ENCODE measurements at regions of chr5 and their contacts with region 1.

Region 1: GRCh38 chr5:72816311-72817145 is at the start of gene TNPO1:
- DNase-seq: peak; percentile 80
- H3K4me3 Mint-ChIP-seq: peak within 1 kb of the TSS; percentile 95
- H3K27ac Mint-ChIP-seq: peak within 1 kb of the TSS; percentile 95
- H3K4me1 Mint-ChIP-seq: peaks cover 22% of the 10 kb centered on the region
- H3K27me3 Mint-ChIP-seq: peaks cover 21% of the 10 kb centered on the region
- total RNA-seq, gene TNPO1: 133 and 142 TPM in 2 replicates

Region 2: GRCh38 chr5:71586941-71587765 is 1229.4 kb before region 1 on chr5 and contains the start of gene MCCC2:
- intact Hi-C with region 1: loop called (anchors 5 kb)
- DNase-seq: peak; percentile 96
- H3K4me3 Mint-ChIP-seq: peak within 1 kb of the TSS; percentile 95
- H3K27ac Mint-ChIP-seq: peak within 1 kb of the TSS; percentile 99
- H3K4me1 Mint-ChIP-seq: peaks cover 36% of the 10 kb centered on the region
- H3K27me3 Mint-ChIP-seq: no peaks in the 10 kb centered on the region
- total RNA-seq, gene MCCC2: 49.8 and 53.8 TPM in 2 replicates

Region 3: GRCh38 chr5:72307968-72308852 is 508.3 kb before region 1 on chr5:
- intact Hi-C with region 1: loop called (anchors 5 kb)
- DNase-seq: peak; percentile 95
- H3K4me3 Mint-ChIP-seq: peak overlapping the region; percentile 90
- H3K27ac Mint-ChIP-seq: peak overlapping the region; percentile 99
- H3K4me1 Mint-ChIP-seq: peaks cover 37% of the 10 kb centered on the region
- H3K27me3 Mint-ChIP-seq: peaks cover 2% of the 10 kb centered on the region

Region 4: GRCh38 chr5:72611118-72611730 is 205.3 kb before region 1 on chr5:
- intact Hi-C with region 1: loop called (anchors 1 kb)
- DNase-seq: peak; percentile 1
- H3K4me3 Mint-ChIP-seq: no peak overlapping the region
- H3K27ac Mint-ChIP-seq: no peak overlapping the region
- H3K4me1 Mint-ChIP-seq: no peaks in the 10 kb centered on the region
- H3K27me3 Mint-ChIP-seq: peaks cover 2% of the 10 kb centered on the region

Region 5: DNA sequence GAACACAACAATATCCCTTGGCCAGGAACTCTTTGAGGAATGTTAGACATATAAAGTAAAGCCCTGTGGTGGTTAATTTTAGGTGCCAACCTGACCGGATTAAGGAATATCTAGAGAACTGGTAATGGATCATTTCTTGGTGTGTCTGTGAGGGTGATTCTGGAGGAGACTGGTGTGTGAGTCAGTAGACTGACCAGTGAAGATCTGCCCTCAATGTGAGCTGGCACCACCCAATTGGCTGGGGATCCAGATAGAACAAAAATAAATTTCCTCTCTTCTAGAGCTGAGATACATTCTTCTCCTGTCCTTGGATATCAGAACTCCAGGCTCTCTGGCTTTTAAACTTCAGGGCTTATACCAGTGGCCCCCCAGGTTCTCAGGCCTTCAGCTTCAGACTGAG is 56.3 kb before region 1 on chr5:
- intact Hi-C with region 1: no loop called
- DNase-seq: no peak
- H3K4me3 Mint-ChIP-seq: no peak overlapping the region
- H3K27ac Mint-ChIP-seq: no peak overlapping the region
- H3K4me1 Mint-ChIP-seq: no peaks in the 10 kb centered on the region
- H3K27me3 Mint-ChIP-seq: peaks cover 14% of the 10 kb centered on the region

Region 6: DNA sequence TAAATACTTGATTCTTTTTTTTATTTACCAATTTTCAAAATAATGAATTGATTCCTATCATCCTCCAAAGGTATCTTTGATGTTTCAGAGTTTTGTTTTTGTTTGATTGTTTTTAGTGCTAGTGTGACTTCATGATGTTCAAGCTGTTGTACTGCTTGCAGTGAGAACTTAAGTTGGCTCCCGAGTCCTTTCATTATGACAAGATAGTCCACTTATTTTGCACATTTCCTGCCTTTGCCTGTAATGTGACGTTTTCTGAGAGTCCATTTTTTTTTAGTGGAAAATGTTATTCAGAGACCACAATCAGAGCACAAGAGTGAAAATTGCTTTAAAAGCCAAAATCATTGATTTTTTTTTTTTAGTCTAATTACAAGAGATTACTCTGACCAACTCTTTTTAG is 79.2 kb after region 1 on chr5:
- intact Hi-C with region 1: loop called (anchors 2 kb)
- DNase-seq: no peak
- H3K4me3 Mint-ChIP-seq: no peak overlapping the region
- H3K27ac Mint-ChIP-seq: peak overlapping the region; percentile 77
- H3K4me1 Mint-ChIP-seq: peaks cover 17% of the 10 kb centered on the region
- H3K27me3 Mint-ChIP-seq: no peaks in the 10 kb centered on the region

Region 7: DNA sequence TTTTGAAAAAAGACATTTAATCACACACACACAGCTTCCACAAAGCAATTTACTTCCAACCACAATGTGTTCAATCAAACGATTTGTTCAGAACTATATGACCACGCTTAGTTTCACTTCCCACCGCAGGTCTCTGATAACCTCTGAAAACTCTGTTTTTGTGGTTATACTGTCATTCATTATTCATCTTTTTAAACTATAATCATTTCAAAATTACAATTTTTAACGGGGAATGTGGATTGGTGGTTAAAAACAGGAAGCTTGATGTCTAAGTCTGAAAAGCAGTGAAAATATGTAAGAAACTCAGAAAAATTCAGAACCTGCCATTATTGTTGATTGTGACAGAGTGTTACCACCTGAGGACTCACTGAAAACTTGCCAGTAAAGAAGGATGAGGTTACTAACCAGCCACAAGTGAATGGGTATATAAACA is 343.7 kb after region 1 on chr5:
- intact Hi-C with region 1: loop called (anchors 2 kb)
- DNase-seq: peak; percentile 38
- H3K4me3 Mint-ChIP-seq: no peak overlapping the region
- H3K27ac Mint-ChIP-seq: peak overlapping the region; percentile 64
- H3K4me1 Mint-ChIP-seq: peaks cover 24% of the 10 kb centered on the region
- H3K27me3 Mint-ChIP-seq: peaks cover 76% of the 10 kb centered on the region

Measured in activated T-helper 1 cell treated with anti-CD3 and anti-CD28 coated beads, Interleukin-12 subunit alpha, Interleukin-12 subunit beta, Interleukin-2, Interleukin-4 antibody, amounts not matched to agents 30 ng/mL and 10 ng/mL and 1 ng/mL, durations not matched to agents 14 hours and 24 hours and 36 hours (primary cell).